Activated CD8-positive, alpha-beta T cell treated with anti-CD3 and anti-CD28 coated beads for 36 hours (primary cell): ENCODE measurements at regions of chr3 and their contacts with region 1.

Region 1: GRCh38 chr3:131502530-131503245 is at the start of gene MRPL3:
- DNase-seq: peak; percentile 90
- ATAC-seq: peak; percentile 93
- H3K4me3 Mint-ChIP-seq: peak within 1 kb of the TSS; percentile 99
- H3K27ac Mint-ChIP-seq: peak within 1 kb of the TSS; percentile 98
- H3K4me1 Mint-ChIP-seq: peaks cover 30% of the 10 kb centered on the region
- H3K27me3 Mint-ChIP-seq: no peaks in the 10 kb centered on the region
- CTCF ChIP-seq: no peak
- total RNA-seq, gene MRPL3: 168 TPM

Region 2: GRCh38 chr3:131033480-131034080 is 469.1 kb before region 1 on chr3:
- CTCF ChIA-PET with region 1: interaction called, 3 read pairs
- POLR2A ChIA-PET with region 1: no interaction called
- intact Hi-C with region 1: loop called (anchors 10 kb)
- DNase-seq: peak; percentile 21
- ATAC-seq: peak; percentile 81
- H3K4me3 Mint-ChIP-seq: no peak overlapping the region
- H3K27ac Mint-ChIP-seq: no peak overlapping the region
- H3K4me1 Mint-ChIP-seq: no peaks in the 10 kb centered on the region
- H3K27me3 Mint-ChIP-seq: no peaks in the 10 kb centered on the region
- CTCF ChIP-seq: peak; percentile 81

Region 3: DNA sequence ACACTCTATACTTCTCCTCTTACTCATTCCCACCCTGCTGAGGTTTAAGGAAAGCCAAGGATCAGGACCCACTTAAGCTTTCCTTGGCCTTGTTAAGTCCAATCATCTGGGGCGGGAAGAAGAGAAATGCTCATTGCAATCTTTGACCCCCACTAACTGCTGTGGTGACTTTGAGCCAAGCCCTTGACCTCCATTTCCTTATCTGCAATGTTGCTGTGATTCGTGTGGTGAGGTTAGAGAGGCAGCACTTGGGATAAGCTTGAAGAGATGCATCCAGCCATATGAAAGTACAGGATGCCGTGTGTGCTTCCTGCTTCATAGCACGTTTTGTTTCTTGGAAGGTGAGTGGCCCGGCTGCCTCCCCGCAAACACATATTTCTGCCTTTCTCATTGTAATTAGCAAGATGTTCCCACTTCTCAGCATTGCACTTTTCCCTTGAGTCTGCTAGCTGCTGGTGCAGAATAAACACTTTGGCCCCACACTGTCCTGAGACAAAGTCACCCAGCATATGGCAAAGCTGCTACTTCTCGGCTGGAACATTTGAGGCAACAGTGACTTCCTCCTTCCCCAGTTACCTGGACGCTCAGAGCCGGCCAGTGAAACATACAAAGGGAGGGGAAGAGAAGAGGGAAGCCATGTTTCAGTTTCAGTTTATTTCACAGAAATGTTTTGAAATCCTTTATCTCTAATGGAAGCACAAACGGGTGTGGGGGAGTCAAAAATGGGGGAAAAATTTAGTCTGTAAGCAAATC is 131.6 kb before region 1 on chr3:
- CTCF ChIA-PET with region 1: no interaction called
- POLR2A ChIA-PET with region 1: no interaction called
- intact Hi-C with region 1: no loop called
- DNase-seq: no peak
- ATAC-seq: no peak
- H3K4me3 Mint-ChIP-seq: no peak overlapping the region
- H3K27ac Mint-ChIP-seq: no peak overlapping the region
- H3K4me1 Mint-ChIP-seq: peaks cover 6% of the 10 kb centered on the region
- H3K27me3 Mint-ChIP-seq: no peaks in the 10 kb centered on the region
- CTCF ChIP-seq: no peak

Region 4: GRCh38 chr3:131421957-131422498 is 80.7 kb before region 1 on chr3:
- CTCF ChIA-PET with region 1: no interaction called
- POLR2A ChIA-PET with region 1: no interaction called
- intact Hi-C with region 1: no loop called
- DNase-seq: no peak
- ATAC-seq: no peak
- H3K4me3 Mint-ChIP-seq: no peak overlapping the region
- H3K27ac Mint-ChIP-seq: no peak overlapping the region
- H3K4me1 Mint-ChIP-seq: no peaks in the 10 kb centered on the region
- H3K27me3 Mint-ChIP-seq: peaks cover 2% of the 10 kb centered on the region
- CTCF ChIP-seq: no peak

Region 5: GRCh38 chr3:131432441-131432840 is 70.2 kb before region 1 on chr3:
- CTCF ChIA-PET with region 1: no interaction called
- POLR2A ChIA-PET with region 1: no interaction called
- intact Hi-C with region 1: no loop called
- DNase-seq: no peak
- ATAC-seq: no peak
- H3K4me3 Mint-ChIP-seq: no peak overlapping the region
- H3K27ac Mint-ChIP-seq: no peak overlapping the region
- H3K4me1 Mint-ChIP-seq: no peaks in the 10 kb centered on the region
- H3K27me3 Mint-ChIP-seq: peaks cover 2% of the 10 kb centered on the region
- CTCF ChIP-seq: no peak

Region 6: GRCh38 chr3:131620977-131621376 is 118.3 kb after region 1 on chr3:
- CTCF ChIA-PET with region 1: no interaction called
- POLR2A ChIA-PET with region 1: no interaction called
- intact Hi-C with region 1: no loop called
- DNase-seq: no peak
- ATAC-seq: no peak
- H3K4me3 Mint-ChIP-seq: no peak overlapping the region
- H3K27ac Mint-ChIP-seq: no peak overlapping the region
- H3K4me1 Mint-ChIP-seq: no peaks in the 10 kb centered on the region
- H3K27me3 Mint-ChIP-seq: peaks cover 14% of the 10 kb centered on the region
- CTCF ChIP-seq: no peak